IMR-90 (cell line): ENCODE measurements at regions of chr6 and their contacts with region 1.

Region 1: GRCh38 chr6:31197559-31198305 is 27.2 kb upstream of the POU5F1 start:
- DNase-seq: peak; percentile 72
- ATAC-seq: peak; percentile 90
- H3K4me3 ChIP-seq: peak overlapping the region; percentile 91
- H3K27ac ChIP-seq: peak overlapping the region; percentile 87
- H3K4me1 ChIP-seq: peaks cover under 1% of the 10 kb centered on the region; the same call in 1 of the 2 replicates
- H3K27me3 ChIP-seq: no peaks in the 10 kb centered on the region
- CTCF ChIP-seq: no peak
- POLR2A ChIP-seq: peak; percentile 59; the same call in 1 of the 2 replicates
- RAD21 ChIP-seq: no peak

Region 2: DNA sequence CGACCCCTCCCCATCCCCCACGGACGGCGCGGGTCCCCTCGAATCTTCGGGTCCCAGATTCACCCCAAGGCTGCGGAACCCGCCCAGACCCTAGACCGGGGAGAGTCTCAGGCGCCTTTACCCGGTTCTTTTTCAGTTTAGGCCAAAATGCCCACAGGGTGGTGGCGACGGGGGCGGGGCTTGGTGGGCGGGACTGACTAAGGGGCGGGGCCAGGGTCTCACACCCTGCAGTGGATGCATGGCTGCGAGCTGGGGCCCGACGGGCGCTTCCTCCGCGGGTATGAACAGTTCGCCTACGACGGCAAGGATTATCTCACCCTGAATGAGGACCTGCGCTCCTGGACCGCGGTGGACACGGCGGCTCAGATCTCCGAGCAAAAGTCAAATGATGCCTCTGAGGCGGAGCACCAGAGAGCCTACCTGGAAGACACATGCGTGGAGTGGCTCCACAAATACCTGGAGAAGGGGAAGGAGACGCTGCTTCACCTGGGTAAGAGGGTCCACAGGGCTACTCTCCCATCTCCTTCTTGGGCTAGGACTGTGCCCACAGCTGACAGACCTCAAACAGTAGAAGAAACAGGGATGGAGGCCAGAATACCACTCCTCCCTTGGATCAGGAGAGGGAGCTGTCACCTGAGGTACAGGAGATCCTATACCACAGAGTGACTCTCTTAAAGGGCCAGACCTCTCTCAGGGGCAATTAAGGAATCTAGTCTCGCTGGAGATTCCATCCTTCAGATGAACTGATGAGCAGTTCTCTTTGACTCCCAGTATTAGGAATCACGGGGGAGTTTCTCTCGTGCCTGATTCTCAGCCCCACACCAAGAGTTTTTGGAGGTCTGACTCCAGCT is 707.5 kb before region 1 on chr6:
- CTCF ChIA-PET with region 1: no interaction called
- POLR2A ChIA-PET with region 1: no interaction called
- dilution Hi-C with region 1: no loop called
- in situ Hi-C with region 1: no loop called
- intact Hi-C with region 1: no loop called
- DNase-seq: peak; percentile 46
- ATAC-seq: peak; percentile 67
- H3K4me3 ChIP-seq: peak overlapping the region; percentile 81
- H3K27ac ChIP-seq: peak overlapping the region; percentile 84
- H3K4me1 ChIP-seq: peaks cover 11% of the 10 kb centered on the region
- H3K27me3 ChIP-seq: no peaks in the 10 kb centered on the region
- CTCF ChIP-seq: no peak
- POLR2A ChIP-seq: no peak
- RAD21 ChIP-seq: no peak

Region 3: DNA sequence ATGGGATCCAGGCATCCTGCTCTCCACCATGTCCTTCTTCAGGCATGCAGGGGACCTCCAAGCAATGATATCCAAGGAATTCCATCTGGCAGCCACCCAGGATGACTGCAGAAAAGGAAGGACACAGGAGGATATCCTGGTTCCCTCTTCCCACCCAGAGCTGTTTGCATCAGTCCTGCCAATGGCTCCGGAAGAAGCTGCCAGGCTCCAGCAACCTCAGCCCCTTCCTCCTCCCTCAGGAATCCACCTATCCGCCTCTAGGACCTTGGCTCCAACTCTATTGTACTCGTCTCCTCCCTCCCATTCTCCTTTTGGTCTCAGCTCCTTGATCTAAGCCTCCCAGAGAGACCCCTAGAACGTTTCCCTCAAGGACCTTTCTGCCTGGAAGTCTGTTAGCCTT is 58.1 kb before region 1 on chr6:
- CTCF ChIA-PET with region 1: no interaction called
- POLR2A ChIA-PET with region 1: interaction called, 3 read pairs
- dilution Hi-C with region 1: no loop called
- in situ Hi-C with region 1: loop called (anchors 5 kb)
- intact Hi-C with region 1: loop called (anchors 1 kb)
- DNase-seq: peak; percentile 46
- ATAC-seq: peak; percentile 25
- H3K4me3 ChIP-seq: no peak overlapping the region
- H3K27ac ChIP-seq: no peak overlapping the region
- H3K4me1 ChIP-seq: peaks cover 13% of the 10 kb centered on the region
- H3K27me3 ChIP-seq: no peaks in the 10 kb centered on the region
- CTCF ChIP-seq: no peak
- POLR2A ChIP-seq: no peak
- RAD21 ChIP-seq: no peak

Region 4: GRCh38 chr6:31441365-31442267 is 243.9 kb after region 1 on chr6:
- CTCF ChIA-PET with region 1: no interaction called
- POLR2A ChIA-PET with region 1: no interaction called
- dilution Hi-C with region 1: no loop called
- in situ Hi-C with region 1: no loop called
- intact Hi-C with region 1: loop called (anchors 2 kb)
- DNase-seq: peak; percentile 34
- ATAC-seq: peak; percentile 99
- H3K4me3 ChIP-seq: no peak overlapping the region
- H3K27ac ChIP-seq: no peak overlapping the region
- H3K4me1 ChIP-seq: peaks cover 2% of the 10 kb centered on the region; the same call in 1 of the 2 replicates
- H3K27me3 ChIP-seq: peaks cover 27% of the 10 kb centered on the region
- CTCF ChIP-seq: peak; percentile 81
- POLR2A ChIP-seq: no peak
- RAD21 ChIP-seq: peak; percentile 81